ENCODE measurements at regions of chr10 and their contacts with region 1.

Region 1: GRCh38 chr10:70272925-70273316 is 10.9 kb downstream of the NPFFR1 start:
- DNase-seq: no peak
- ATAC-seq: peak; percentile 81
- H3K4me3 Mint-ChIP-seq: no peak overlapping the region
- H3K27ac Mint-ChIP-seq: peak overlapping the region; percentile 23
- H3K4me1 Mint-ChIP-seq: peaks cover 16% of the 10 kb centered on the region
- H3K27me3 Mint-ChIP-seq: no peaks in the 10 kb centered on the region

Region 2: GRCh38 chr10:70233109-70233938 is 39.6 kb before region 1 on chr10 and contains the start of gene PPA1:
- CTCF ChIA-PET with region 1: interaction called, 15 read pairs
- POLR2A ChIA-PET with region 1: no interaction called
- DNase-seq: peak; percentile 99
- ATAC-seq: peak; percentile 93
- H3K4me3 Mint-ChIP-seq: peak within 1 kb of the TSS; percentile 78
- H3K27ac Mint-ChIP-seq: peak within 1 kb of the TSS; percentile 79
- H3K4me1 Mint-ChIP-seq: peaks cover 45% of the 10 kb centered on the region
- H3K27me3 Mint-ChIP-seq: peaks cover 2% of the 10 kb centered on the region
- total RNA-seq, gene PPA1: 175 TPM

Region 3: GRCh38 chr10:70355051-70356021 is 82.4 kb after region 1 on chr10:
- CTCF ChIA-PET with region 1: interaction called, 17 read pairs
- POLR2A ChIA-PET with region 1: interaction called, 3 read pairs
- DNase-seq: peak; percentile 38
- ATAC-seq: peak; percentile 57
- H3K4me3 Mint-ChIP-seq: peak overlapping the region; percentile 65
- H3K27ac Mint-ChIP-seq: peak overlapping the region; percentile 84
- H3K4me1 Mint-ChIP-seq: peaks cover 32% of the 10 kb centered on the region
- H3K27me3 Mint-ChIP-seq: no peaks in the 10 kb centered on the region

Measured in activated CD8-positive, alpha-beta T cell treated with anti-CD3 and anti-CD28 coated beads, Interleukin-2, amount 10 ng/mL, durations not matched to agents 7 days and 5 days (primary cell).